GM13976 (cell line): ENCODE measurements at regions of chr13 and their contacts with region 1.

Region 1: GRCh38 chr13:74287724-74288169 is 153.5 kb upstream of the KLF12 start:
- DNase-seq: peak; percentile 27
- CTCF ChIP-seq: no peak

Region 2: GRCh38 chr13:73835138-73835721 is 452.5 kb before region 1 on chr13:
- in situ Hi-C with region 1: loop called (anchors 10 kb)
- DNase-seq: peak; percentile 36
- CTCF ChIP-seq: peak; percentile 31

Region 3: DNA sequence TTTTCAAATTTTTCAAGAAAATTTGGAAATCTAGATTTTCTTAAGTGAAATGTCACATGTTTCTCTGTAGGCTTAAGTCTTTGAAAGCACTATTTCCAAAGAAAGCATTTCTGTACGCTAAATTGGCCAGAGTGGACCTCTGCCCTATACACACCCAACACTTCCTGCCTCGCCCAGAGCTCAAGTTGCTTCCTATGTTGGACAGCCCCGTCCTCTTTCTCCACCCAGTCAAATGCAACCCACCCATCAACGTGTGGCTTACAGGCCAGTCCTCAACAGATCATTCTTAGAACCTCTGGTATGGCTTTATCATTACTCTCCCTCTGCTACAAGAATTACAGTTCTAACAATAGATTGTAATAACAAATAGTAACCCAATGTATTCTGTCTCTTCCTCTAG is 177.7 kb before region 1 on chr13:
- in situ Hi-C with region 1: no loop called
- DNase-seq: no peak
- CTCF ChIP-seq: no peak

Region 4: GRCh38 chr13:74398599-74398998 is 110.9 kb after region 1 on chr13:
- in situ Hi-C with region 1: no loop called
- DNase-seq: no peak
- CTCF ChIP-seq: no peak